PC-9 (cell line): ENCODE measurements at regions of chr2 and their contacts with region 1.

Region 1: DNA sequence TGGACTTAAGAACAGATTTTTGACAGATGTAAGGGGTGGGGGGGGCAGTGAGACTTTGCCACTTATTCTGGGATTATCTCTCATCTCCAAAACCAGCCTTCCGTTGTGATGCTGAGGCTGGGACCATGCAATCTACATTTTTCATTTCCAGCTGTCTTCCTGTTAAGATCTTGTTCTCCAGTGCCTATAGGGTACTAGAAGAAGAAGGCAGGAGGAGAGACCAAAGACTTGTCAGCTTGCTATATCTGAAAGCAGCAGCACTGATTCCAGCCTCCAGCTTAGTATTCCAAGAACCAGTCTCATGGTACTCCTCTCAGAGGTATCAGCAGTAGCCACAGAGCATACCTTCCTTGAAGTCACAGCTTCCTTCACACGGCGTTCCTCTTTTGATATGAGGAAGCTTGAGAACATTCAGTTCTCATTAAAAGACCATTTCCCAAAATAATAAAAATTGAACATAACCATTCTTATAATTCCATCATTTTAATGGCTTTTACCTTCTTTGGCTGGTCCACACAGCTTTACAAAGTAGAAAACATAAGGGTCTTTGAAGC is 49.8 kb downstream of the USP34 start:
- DNase-seq: no peak
- H3K4me3 ChIP-seq: no peak overlapping the region
- H3K27ac ChIP-seq: no peak overlapping the region
- H3K4me1 ChIP-seq: no peaks in the 10 kb centered on the region
- H3K27me3 ChIP-seq: no peaks in the 10 kb centered on the region
- CTCF ChIP-seq: no peak

Region 2: DNA sequence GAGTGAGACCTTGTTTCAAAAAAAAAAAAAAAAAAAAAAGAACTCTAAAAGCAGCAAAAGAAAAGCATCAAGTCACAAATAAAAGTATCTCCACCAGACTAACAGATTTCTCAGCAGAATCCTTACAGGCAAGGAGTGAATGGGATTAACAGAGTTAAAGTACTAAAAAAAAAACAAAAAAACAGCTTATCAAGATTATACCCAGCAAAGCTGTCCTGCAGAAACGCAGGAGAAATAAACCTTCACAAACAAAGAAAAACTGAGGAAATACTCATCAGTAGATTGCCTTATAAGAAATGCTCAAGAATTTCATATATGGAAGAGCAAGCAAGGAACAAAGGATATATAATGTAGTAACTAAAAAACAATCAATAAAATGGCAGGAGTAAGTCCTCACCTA is 14.2 kb after region 1 on chr2:
- CTCF ChIA-PET with region 1: interaction called, 17 read pairs
- POLR2A ChIA-PET with region 1: no interaction called
- intact Hi-C with region 1: no loop called
- DNase-seq: no peak
- H3K4me3 ChIP-seq: no peak overlapping the region
- H3K27ac ChIP-seq: no peak overlapping the region
- H3K4me1 ChIP-seq: no peaks in the 10 kb centered on the region
- H3K27me3 ChIP-seq: no peaks in the 10 kb centered on the region
- CTCF ChIP-seq: no peak

Region 3: DNA sequence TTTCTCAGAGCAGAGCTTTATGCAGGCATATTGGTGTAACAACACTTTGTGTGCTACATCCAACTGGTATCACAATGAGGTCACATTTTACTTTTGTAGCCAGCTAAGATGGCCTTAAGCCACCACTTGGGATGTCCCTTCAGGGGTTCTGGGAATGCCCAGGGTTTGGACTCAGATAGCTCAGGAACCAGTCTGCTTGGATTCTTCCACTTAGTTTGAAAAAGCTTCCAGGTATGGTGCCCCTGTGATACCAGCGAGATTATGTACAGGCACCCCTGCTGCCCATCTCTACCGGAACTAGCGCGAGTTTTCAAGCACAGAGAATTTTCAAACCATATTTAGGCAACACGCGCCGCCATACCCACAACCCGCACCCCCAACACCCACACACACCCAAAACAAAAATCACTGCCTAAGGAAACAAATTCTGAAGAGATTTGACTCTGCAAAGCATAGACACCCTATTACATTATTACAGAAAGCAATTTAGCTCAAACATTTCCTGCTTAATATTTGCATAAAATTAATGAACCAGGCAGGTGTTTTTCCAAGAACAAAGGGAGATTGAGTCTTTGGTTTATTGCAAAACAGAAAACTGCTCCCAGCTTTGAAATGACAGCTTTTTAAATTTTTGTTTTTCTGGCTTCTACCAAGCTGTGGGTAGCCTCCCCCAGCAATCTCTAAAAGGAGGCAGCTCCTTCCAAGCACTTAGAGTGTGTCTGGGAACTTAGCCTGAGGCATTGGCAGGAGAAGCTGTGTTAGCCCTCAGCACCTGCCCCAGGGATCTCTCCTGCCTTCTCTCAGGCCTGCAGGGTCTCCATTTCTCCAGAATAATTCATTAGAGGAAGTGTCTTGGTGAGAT is 833.2 kb after region 1 on chr2:
- CTCF ChIA-PET with region 1: no interaction called
- POLR2A ChIA-PET with region 1: no interaction called
- intact Hi-C with region 1: no loop called
- DNase-seq: no peak
- H3K4me3 ChIP-seq: no peak overlapping the region
- H3K27ac ChIP-seq: no peak overlapping the region
- H3K4me1 ChIP-seq: no peaks in the 10 kb centered on the region
- H3K27me3 ChIP-seq: no peaks in the 10 kb centered on the region
- CTCF ChIP-seq: no peak